Heart left ventricle (tissue), 16 donors: ENCODE measurements at regions of chr10 and their contacts with region 1.

Region 1: GRCh38 chr10:97334370-97335175 is at the start of gene FRAT2:
- DNase-seq: peak; percentile 93 to 96 (median 94)
- ATAC-seq: peak; percentile 94 to 97 (median 96)
- H3K4me3 ChIP-seq: peak within 1 kb of the TSS; percentile 67 to 100 (median 90)
- H3K27ac ChIP-seq: peak within 1 kb of the TSS; percentile 88 to 99 (median 95)
- H3K4me1 ChIP-seq: peaks cover 2 to 68% (median 38%) of the 10 kb centered on the region in 12 donors
- H3K27me3 ChIP-seq: no peaks in the 10 kb centered on the region
- CTCF ChIP-seq: no peak
- POLR2A ChIP-seq: peak in 1 of 2 donors; percentile 83
- total RNA-seq, gene FRAT2: 4.4 to 12.4 (median 7.5) TPM

Region 2: GRCh38 chr10:97278491-97278989 is 56.0 kb before region 1 on chr10:
- intact Hi-C with region 1: loop called in 8 of 10 experiments (anchors 2 to 10 kb)
- DNase-seq: no peak
- ATAC-seq: peak; percentile 83 to 94 (median 90)
- H3K4me3 ChIP-seq: no peak overlapping the region
- H3K27ac ChIP-seq: peak overlapping the region in 10 of 12 donors; percentile 11 to 64 (median 44)
- H3K4me1 ChIP-seq: peaks cover 0 to 25% (median 11%) of the 10 kb centered on the region in 12 donors
- H3K27me3 ChIP-seq: no peaks in the 10 kb centered on the region
- CTCF ChIP-seq: peak; percentile 60 to 83 (median 72)
- POLR2A ChIP-seq: no peak

Region 3: GRCh38 chr10:97292097-97292862 is 42.3 kb before region 1 on chr10 and contains the start of gene ARHGAP19:
- intact Hi-C with region 1: loop called in 6 of 10 experiments (anchors 1 to 5 kb)
- DNase-seq: peak; percentile 94 to 98 (median 97)
- ATAC-seq: peak; percentile 99 to 100 (median 99)
- H3K4me3 ChIP-seq: peak within 1 kb of the TSS; percentile 70 to 100 (median 90)
- H3K27ac ChIP-seq: peak within 1 kb of the TSS; percentile 75 to 98 (median 95)
- H3K4me1 ChIP-seq: peaks cover 0 to 12% (median 8%) of the 10 kb centered on the region in 12 donors
- H3K27me3 ChIP-seq: no peaks in the 10 kb centered on the region
- CTCF ChIP-seq: peak in 3 of 12 donors; percentile 6 to 30 (median 19)
- POLR2A ChIP-seq: peak in 1 of 2 donors; percentile 75
- total RNA-seq, gene ARHGAP19: 3.0 to 7.4 (median 4.1) TPM